Natural killer cell (primary cell): ENCODE measurements at regions of chr2 and their contacts with region 1.

Region 1: GRCh38 chr2:23926750-23927571 is at the start of gene ATAD2B:
- DNase-seq: peak; percentile 91 to 98
- ATAC-seq: peak; percentile 79 to 93 (median 83)
- H3K4me3 ChIP-seq: peak within 1 kb of the TSS; percentile 98
- H3K4me3 Mint-ChIP-seq: peak within 1 kb of the TSS; percentile 98
- H3K27ac ChIP-seq: peak within 1 kb of the TSS; percentile 97
- H3K27ac Mint-ChIP-seq: peak within 1 kb of the TSS; percentile 99 to 100
- H3K4me1 ChIP-seq: peaks cover 19% of the 10 kb centered on the region
- H3K4me1 Mint-ChIP-seq: peaks cover 50 to 53% of the 10 kb centered on the region in 2 donors
- H3K27me3 ChIP-seq: no peaks in the 10 kb centered on the region
- H3K27me3 Mint-ChIP-seq: no peaks in the 10 kb centered on the region
- CTCF ChIP-seq: peak; percentile 55
- total RNA-seq, gene ATAD2B: 71.5 to 85.7 (median 84.0) TPM

Region 2: DNA sequence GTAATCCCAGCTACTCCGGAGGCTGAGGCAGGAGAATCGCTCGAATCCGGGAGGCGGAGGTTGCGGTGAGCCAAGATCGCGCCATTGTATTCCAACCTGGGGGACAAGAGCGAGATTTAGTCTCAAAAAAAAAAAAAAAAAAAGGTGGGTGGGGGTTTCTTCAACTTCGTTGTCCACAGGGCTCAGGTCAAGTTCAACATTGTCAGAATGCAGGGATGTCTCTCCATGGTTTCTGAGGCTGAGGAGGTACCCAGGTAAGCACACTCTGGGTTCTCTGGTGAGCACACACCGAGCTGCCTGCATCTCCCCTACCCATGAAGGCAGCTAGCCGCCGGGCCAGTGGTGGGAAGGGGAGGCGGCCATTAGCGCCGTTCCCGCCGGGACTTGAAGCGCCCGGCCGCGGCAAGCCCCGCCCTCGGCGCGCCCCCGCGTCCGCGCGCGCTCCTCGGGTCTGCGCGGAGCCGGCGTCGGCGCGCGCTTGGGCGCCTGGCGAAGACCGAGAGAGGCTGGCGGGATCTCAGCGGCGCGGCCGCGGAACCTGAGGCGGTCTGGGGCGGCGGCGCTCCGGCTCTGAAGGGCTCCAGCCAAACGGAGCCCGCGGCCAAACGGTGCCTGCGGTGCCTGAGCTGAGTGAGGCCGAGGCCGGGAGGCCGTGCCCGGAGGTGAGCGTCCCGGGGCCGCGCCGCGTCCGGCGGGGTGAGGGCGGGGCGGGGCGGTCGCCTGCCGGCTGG is 13.2 kb after region 1 on chr2 and contains the start of gene UBXN2A:
- intact Hi-C with region 1: loop called (anchors 1 kb)
- DNase-seq: peak; percentile 83 to 92
- ATAC-seq: peak; percentile 89 to 95 (median 91)
- H3K4me3 ChIP-seq: peak within 1 kb of the TSS; percentile 66
- H3K4me3 Mint-ChIP-seq: peak within 1 kb of the TSS; percentile 97
- H3K27ac ChIP-seq: peak within 1 kb of the TSS; percentile 63
- H3K27ac Mint-ChIP-seq: peak within 1 kb of the TSS; percentile 85 to 88
- H3K4me1 ChIP-seq: peaks cover 8% of the 10 kb centered on the region
- H3K4me1 Mint-ChIP-seq: peaks cover 20 to 27% of the 10 kb centered on the region in 2 donors
- H3K27me3 ChIP-seq: peaks cover 2% of the 10 kb centered on the region
- H3K27me3 Mint-ChIP-seq: peaks cover 0 to 9% of the 10 kb centered on the region in 2 donors
- CTCF ChIP-seq: no peak
- total RNA-seq, gene UBXN2A: 14.7 to 18.0 (median 16.2) TPM

Region 3: DNA sequence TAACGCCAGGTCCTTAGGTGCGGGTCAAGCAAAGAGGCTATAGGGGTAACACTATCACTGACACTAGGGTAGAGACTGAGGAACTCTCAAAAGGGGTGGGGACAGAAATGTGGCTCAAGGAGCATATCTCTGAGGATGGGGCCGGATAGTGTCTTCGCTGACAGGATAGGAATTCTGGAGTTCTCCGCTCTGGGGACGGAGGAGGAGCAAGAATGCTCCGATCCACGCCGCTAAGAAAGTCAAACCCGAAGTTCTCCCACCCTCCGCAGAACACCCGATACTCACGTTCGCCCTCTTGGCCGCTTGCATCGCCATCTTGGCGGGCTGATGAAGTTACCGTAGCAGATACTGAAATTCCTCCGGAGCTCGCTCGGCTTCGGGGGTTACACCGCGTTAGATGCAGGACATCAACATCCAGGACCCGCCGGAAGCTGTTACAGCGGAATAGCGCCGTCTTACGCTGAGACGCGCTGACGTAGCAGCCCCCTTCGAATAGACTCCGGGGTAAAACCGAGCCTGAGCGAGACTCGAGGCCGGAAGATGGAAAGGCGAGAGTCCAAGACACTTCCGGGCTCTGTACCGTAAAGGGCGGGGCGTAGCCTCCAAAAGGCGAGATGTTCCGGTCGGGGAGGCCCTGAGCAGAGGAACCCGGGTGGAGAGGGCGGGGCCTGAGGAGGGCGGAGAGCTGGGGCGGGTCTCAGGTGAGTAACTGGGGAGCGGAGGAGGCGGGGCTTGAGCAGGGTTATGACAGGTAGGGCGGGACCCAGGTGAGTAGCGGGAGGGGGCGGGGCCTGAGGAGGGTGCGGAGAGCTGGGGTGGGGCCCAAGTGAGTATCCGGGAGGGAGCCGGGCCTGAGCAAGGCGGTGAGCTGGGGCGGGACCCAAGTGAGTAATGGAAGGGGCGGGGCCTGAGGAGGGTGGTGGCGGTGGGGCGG is 149.2 kb after region 1 on chr2 and contains the start of gene SF3B6:
- intact Hi-C with region 1: loop called (anchors 1 kb)
- DNase-seq: peak; percentile 96 to 100
- ATAC-seq: peak; percentile 83 to 95 (median 88)
- H3K4me3 ChIP-seq: peak within 1 kb of the TSS; percentile 94
- H3K4me3 Mint-ChIP-seq: peak within 1 kb of the TSS; percentile 94
- H3K27ac ChIP-seq: peak within 1 kb of the TSS; percentile 89
- H3K27ac Mint-ChIP-seq: peak within 1 kb of the TSS; percentile 94 to 98
- H3K4me1 ChIP-seq: peaks cover 17% of the 10 kb centered on the region
- H3K4me1 Mint-ChIP-seq: peaks cover 12 to 32% of the 10 kb centered on the region in 2 donors
- H3K27me3 ChIP-seq: no peaks in the 10 kb centered on the region
- H3K27me3 Mint-ChIP-seq: no peaks in the 10 kb centered on the region
- CTCF ChIP-seq: no peak
- total RNA-seq, gene SF3B6: 57.2 to 65.1 (median 57.4) TPM